Uterus (tissue), 4 donors: ENCODE measurements at regions of chr14 and their contacts with region 1.

Region 1: GRCh38 chr14:50943943-50944646 is at the start of gene PYGL:
- DNase-seq: peak; percentile 66 to 77
- H3K4me3 ChIP-seq: peak within 1 kb of the TSS; percentile 74 to 88
- H3K27ac ChIP-seq: peak within 1 kb of the TSS; percentile 83 to 92
- H3K4me1 ChIP-seq: no peaks in the 10 kb centered on the region
- H3K27me3 ChIP-seq: no peaks in the 10 kb centered on the region
- CTCF ChIP-seq: peak in 1 of 4 experiments; percentile 6
- POLR2A ChIP-seq: peak in 1 of 2 donors; percentile 71
- total RNA-seq, gene PYGL: 15.4 to 62.4 (median 35.2) TPM

Region 2: GRCh38 chr14:51239813-51240803 is 296.0 kb after region 1 on chr14 and contains the start of gene TMX1:
- intact Hi-C with region 1: loop called (anchors 10 kb)
- DNase-seq: peak; percentile 96
- H3K4me3 ChIP-seq: peak within 1 kb of the TSS; percentile 80 to 98
- H3K27ac ChIP-seq: peak within 1 kb of the TSS; percentile 82 to 85
- H3K4me1 ChIP-seq: no peaks in the 10 kb centered on the region
- H3K27me3 ChIP-seq: no peaks in the 10 kb centered on the region
- CTCF ChIP-seq: peak in 3 of 4 experiments; percentile 9 to 33 (median 22)
- POLR2A ChIP-seq: peak; percentile 63 to 88
- total RNA-seq, gene TMX1: 6.4 to 58.6 (median 28.8) TPM